ENCODE measurements at regions of chr1 and their contacts with region 1.

Region 1: DNA sequence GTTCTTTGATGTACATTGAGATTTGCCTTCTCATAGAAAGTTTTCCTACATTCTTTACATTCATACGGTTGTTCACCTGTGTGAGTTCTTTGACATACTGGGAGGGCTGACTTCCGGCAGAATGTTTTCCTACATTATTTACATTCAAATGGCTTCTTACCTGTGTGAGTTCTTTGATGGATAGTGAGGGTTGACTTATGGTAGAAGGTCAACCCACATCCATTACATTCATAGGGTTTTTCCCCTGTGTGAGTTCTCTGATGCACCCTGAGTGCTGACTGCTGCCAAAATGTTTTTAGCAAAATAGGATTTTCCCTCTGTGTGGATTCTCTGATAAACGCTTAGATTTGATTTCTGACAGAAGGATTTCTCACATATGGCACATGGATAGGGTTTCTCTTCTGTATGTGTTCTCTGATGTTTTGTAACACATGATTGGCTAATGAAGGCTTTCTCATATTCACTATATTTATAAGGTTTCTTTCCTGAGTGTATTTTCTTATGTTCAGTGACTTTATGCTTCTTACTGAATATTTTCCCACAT is 37.7 kb downstream of the JMJD4 start:
- DNase-seq: no peak
- ATAC-seq: no peak
- H3K4me3 ChIP-seq: no peak overlapping the region
- H3K27ac ChIP-seq: no peak overlapping the region
- H3K4me1 ChIP-seq: no peaks in the 10 kb centered on the region
- H3K27me3 ChIP-seq: no peaks in the 10 kb centered on the region
- CTCF ChIP-seq: no peak
- POLR2A ChIP-seq: no peak
- RAD21 ChIP-seq: no peak

Region 2: DNA sequence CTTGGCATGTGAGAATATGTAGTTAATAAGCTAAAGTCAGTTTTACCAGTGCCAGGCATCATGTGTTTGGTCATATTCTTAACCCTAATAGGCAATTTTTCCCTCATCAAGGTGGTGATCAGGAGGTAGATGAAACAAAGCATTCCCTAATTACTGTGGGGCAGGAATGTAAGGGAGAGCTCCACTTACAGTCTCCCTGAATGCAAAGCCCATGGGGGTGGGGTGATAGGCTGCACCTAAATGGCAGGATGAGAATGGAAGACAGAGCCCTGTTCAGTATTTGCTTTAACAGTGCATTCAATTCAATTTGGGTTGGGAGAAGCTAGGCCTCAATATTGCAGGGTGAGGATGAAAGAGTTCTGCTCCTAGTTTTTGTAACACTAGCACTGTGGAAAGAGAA is 110.7 kb before region 1 on chr1:
- CTCF ChIA-PET with region 1: no interaction called
- POLR2A ChIA-PET with region 1: no interaction called
- RAD21 ChIA-PET with region 1: no interaction called
- intact Hi-C with region 1: loop called (anchors 10 kb)
- DNase-seq: no peak
- ATAC-seq: no peak
- H3K4me3 ChIP-seq: no peak overlapping the region
- H3K27ac ChIP-seq: no peak overlapping the region
- H3K4me1 ChIP-seq: no peaks in the 10 kb centered on the region
- H3K27me3 ChIP-seq: no peaks in the 10 kb centered on the region
- CTCF ChIP-seq: no peak
- POLR2A ChIP-seq: no peak
- RAD21 ChIP-seq: no peak

Measured in HCT116 (cell line).